ENCODE measurements at regions of chr1 and their contacts with region 1.

Region 1: GRCh38 chr1:154669464-154670282 is 61.7 kb upstream of the ADAR start:
- DNase-seq: peak; percentile 79
- ATAC-seq: peak; percentile 99

Region 2: GRCh38 chr1:154878371-154879022 is 208.8 kb after region 1 on chr1:
- intact Hi-C with region 1: loop called (anchors 5 kb)
- DNase-seq: peak; percentile 89
- ATAC-seq: peak; percentile 96

Measured in left ventricle myocardium superior (tissue), 1 donor.